Left ventricle myocardium superior (tissue), 1 donor: ENCODE measurements at regions of chr1 and their contacts with region 1.

Region 1: DNA sequence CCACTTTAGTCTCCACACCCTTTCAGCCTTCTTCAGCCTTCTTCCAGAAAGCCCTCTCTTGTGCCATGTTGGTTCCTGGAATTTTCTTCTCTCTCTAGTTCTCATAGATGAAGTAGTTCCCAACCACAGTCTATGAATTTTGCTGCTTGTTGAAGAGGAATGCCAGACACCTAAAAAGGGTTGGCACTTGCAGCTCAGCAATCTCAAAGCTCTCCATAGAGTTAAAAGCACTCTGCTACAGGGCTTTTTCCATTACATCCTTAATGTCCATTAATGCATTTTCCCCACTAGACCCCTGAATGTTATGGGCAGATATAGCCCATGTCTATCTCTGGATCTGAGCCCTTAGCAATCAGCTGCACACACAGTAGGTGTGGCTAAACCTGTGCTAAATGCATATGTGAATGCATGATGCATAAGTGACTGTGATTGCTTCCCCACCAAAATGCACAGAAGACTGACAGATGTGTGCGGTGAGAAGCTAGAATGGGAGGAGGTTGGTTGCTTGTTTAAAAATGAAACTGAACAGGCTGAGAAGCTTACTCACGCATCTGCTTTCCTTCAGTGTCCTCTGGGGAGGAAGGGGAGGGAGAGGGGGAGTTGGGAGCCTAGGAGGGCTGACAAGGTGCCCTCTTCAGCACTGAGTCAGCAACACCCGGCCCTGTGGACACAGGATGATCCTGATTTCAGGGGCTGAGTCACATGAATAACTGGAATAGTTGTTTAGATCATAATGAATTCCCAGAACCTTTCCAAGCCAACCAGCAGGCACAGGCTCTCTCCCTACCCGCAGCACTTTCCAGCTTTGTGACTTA is 146.1 kb upstream of the FGGY start:
- DNase-seq: peak; percentile 85
- ATAC-seq: peak; percentile 96

Region 2: DNA sequence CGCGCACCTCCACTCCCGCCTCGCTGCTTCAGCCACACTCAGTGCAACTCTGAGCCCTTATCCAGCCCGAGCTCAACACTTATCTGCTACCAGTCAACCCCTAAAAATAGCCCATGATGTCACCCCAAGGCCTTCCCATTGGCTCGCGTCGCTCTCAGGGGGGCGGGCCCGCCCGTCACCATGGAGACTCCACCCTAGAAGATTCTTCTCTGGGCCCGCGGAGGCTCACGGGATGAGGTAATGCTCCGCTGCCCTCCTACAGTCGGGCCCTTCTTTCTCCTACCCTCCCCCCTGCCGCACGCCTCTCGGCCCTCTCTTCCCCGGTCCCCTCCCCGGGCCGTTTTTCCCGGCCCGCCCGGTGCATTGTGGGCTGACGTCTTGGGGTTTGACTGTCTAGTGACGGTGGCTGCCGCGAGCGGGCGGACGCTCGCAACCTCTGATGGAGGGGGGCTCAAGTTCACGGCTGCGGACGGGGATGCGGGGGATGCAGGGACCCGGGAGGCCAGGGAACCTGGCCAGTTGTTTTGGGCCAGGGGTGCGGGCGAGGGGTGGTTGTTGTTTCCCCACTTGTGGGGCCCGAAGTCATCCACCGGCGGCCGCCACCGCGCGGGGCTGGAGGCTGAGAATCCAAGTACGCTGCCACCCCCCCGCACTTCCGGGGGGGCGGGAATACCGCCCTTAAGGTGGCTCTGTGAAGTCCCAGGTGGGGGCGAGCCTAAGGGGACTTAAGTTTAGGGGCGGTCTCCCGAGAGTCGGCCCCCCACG is 366.6 kb before region 1 on chr1 and contains the start of gene JUN:
- intact Hi-C with region 1: loop called (anchors 10 kb)
- DNase-seq: peak; percentile 99
- ATAC-seq: peak; percentile 83
- total RNA-seq, gene JUN: 54.6 TPM

Region 3: DNA sequence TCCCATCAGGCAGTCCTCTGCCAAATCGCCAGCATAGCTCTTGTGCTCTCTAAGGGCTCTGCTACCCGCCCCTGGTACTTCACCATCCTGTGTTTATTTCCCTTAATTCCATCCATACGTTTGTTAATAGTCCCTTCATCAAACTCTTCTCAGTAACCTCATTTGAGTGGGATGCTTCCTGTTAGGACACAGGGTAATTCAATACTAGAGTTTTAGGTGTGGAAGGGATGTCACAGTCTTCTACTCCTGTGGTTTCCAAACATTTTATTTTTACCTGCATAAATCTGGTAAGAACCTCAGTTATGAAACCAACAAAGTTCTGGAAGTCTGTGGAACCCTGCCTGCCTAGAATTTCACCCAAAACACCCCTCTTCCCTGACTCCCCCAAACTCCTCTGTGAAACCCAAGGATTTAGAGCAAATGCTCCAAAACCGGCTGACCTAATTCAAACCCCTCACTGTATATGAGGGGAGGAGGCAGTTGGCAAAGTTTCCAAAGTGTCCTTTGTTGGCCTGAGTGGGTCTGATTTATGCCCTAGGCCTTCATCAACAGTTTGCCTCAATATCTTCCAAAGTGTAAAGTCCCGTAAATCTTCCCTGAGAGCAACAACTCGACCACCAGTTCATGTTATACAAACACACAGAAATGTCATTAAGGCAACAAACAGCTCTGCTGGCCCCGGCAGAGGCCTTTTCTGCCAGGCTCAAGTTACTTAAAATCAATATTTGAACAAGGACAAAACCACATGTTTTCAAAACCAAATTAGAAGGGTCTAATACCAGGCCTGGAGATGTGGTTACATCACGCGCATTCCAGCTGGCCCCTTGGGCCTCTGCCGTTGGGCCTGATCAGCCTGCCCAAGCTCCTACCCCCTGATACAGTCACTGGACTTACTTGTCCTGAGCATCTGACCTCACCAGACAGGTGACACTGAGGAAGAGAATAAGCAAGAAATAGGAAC is 63.7 kb after region 1 on chr1:
- intact Hi-C with region 1: no loop called
- DNase-seq: no peak
- ATAC-seq: no peak

Region 4: DNA sequence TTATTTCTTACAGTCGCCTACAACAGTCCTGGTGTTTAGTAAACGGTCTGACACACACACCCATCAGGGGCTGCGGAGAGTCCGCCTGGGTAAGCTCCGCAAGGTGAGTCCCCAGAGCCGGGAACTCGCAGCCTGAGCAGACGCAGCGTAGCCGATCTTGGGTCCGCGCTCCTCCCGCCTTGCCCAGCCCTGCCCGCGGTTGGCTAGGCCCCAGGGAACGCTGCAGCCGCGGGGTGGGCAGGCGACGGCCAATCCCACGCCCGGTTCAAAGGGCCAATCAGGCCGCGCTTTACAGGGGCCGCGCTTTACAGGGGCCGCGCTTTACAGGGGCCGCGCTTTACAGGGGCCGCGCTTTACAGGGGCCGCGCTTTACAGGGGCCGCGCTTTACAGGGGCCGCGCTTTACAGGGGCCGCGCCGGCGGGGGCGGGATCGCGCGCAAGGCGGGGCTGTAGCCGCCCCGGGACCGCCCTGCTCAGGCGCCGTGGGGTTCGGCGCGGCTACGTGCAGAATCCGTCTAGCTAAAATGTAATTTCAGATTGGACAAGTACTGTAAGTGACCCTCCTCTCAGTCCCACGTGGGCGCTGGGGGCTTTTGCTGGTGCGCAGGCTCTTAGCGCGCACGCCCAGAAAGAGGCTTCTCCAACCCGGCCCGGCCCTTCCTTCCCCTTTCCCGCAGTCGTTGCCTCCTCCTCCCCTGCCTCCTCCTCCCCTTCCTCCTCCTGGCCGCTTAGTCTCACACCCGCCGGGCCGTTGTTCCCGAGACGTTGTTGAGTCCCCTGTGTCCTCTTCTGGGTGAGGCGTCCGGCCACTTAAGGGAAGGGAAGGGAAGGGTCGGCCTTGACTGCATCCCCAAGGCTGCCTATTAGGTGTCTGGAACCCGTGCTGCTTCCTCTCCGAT is 145.8 kb after region 1 on chr1 and contains the start of gene FGGY:
- intact Hi-C with region 1: loop called (anchors 10 kb)
- DNase-seq: peak; percentile 98
- ATAC-seq: peak; percentile 92
- total RNA-seq, gene FGGY: 29.7 TPM